ENCODE measurements at regions of chr6 and their contacts with region 1.

Region 1: GRCh38 chr6:142946181-142946923 is 1.4 kb upstream of the HIVEP2 start:
- DNase-seq: peak; percentile 92 to 99 (median 95)
- H3K4me3 ChIP-seq: peak overlapping the region; percentile 51 to 92
- H3K4me3 Mint-ChIP-seq: peak overlapping the region; percentile 92 to 100 (median 94)
- H3K27ac ChIP-seq: peak overlapping the region; percentile 99
- H3K27ac Mint-ChIP-seq: peak overlapping the region; percentile 99 to 100 (median 99)
- H3K4me1 ChIP-seq: peaks cover 33% of the 10 kb centered on the region
- H3K4me1 Mint-ChIP-seq: peaks cover 23 to 57% (median 32%) of the 10 kb centered on the region in 4 donors
- H3K27me3 ChIP-seq: no peaks in the 10 kb centered on the region
- H3K27me3 Mint-ChIP-seq: peaks cover 0 to 7% of the 10 kb centered on the region in 2 donors

Region 2: DNA sequence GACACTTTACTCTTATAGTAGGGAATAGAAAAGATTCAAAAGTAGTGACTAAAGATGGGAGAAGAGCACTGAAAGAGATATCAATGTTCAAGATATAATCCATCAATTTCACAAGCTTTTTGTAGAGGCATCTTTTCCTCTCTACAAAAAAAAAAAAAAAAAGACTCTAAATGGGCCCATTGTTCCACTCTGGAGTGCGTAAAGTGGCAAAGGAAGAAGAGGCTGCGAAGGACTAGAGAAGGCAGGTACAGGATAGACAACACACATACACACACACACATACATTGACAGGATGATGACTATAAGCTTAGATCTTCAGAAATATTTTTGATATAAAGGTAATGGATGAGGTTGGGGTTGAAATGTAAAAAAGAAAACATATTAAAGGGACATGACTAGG is 158.9 kb before region 1 on chr6:
- CTCF ChIA-PET with region 1: no interaction called
- POLR2A ChIA-PET with region 1: no interaction called
- intact Hi-C with region 1: no loop called
- DNase-seq: no peak
- H3K4me3 ChIP-seq: no peak overlapping the region
- H3K4me3 Mint-ChIP-seq: peak overlapping the region in 2 of 8 donors; percentile 16 to 35
- H3K27ac ChIP-seq: no peak overlapping the region
- H3K27ac Mint-ChIP-seq: peak overlapping the region; percentile 3 to 92 (median 56)
- H3K4me1 ChIP-seq: peaks cover 74% of the 10 kb centered on the region
- H3K4me1 Mint-ChIP-seq: peaks cover 48 to 77% (median 61%) of the 10 kb centered on the region in 4 donors
- H3K27me3 ChIP-seq: no peaks in the 10 kb centered on the region
- H3K27me3 Mint-ChIP-seq: no peaks in the 10 kb centered on the region

Region 3: DNA sequence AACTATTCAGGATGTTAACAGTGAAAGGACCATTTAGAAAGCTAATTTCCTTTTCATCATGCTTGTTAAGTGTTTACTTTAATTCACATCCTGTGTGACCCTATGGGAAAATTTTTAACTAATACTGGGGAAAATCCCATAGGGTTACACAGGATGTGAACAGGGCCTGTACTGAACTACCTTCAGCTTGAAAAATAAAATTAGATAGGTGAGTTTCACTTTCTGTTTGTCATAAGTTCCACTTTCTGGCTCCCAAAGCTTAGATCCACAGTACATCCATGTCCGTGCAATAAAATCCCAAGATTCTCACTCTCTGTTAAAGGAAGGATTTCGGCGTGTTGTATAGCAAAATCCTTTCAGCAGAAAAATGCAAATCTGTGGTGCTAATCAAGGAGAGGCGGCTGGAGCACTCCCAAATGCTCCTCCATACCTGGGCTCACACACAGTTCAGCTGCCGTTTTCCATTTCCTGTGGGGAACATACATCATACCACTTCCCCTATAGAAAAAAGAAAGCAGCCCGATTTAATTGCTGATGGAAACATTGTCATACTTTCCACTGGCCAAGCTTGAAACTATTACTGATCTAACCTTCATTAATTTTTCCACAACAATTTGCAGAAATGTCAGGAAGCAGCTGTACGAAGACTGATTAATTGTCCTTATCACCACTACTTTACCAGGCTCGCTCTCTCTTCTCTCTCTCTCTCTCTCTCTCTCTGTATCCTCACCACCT is 126.6 kb before region 1 on chr6:
- CTCF ChIA-PET with region 1: interaction called, 3 read pairs
- POLR2A ChIA-PET with region 1: interaction called, 10 read pairs
- intact Hi-C with region 1: no loop called
- DNase-seq: peak; percentile 45 to 84 (median 52)
- H3K4me3 ChIP-seq: peak overlapping the region; percentile 37 to 48
- H3K4me3 Mint-ChIP-seq: peak overlapping the region; percentile 76 to 92 (median 90)
- H3K27ac ChIP-seq: peak overlapping the region; percentile 76
- H3K27ac Mint-ChIP-seq: peak overlapping the region; percentile 87 to 100 (median 94)
- H3K4me1 ChIP-seq: peaks cover 88% of the 10 kb centered on the region
- H3K4me1 Mint-ChIP-seq: peaks cover 62 to 84% (median 71%) of the 10 kb centered on the region in 4 donors
- H3K27me3 ChIP-seq: no peaks in the 10 kb centered on the region
- H3K27me3 Mint-ChIP-seq: peaks cover 0 to 3% of the 10 kb centered on the region in 2 donors

Region 4: GRCh38 chr6:142850679-142851423 is 95.5 kb before region 1 on chr6:
- CTCF ChIA-PET with region 1: no interaction called
- POLR2A ChIA-PET with region 1: interaction called, 145 read pairs
- intact Hi-C with region 1: no loop called
- DNase-seq: peak in 1 of 5 donors; percentile 76
- H3K4me3 ChIP-seq: no peak overlapping the region
- H3K4me3 Mint-ChIP-seq: peak overlapping the region; percentile 62 to 86 (median 78)
- H3K27ac ChIP-seq: peak overlapping the region; percentile 46
- H3K27ac Mint-ChIP-seq: peak overlapping the region; percentile 88 to 96 (median 94)
- H3K4me1 ChIP-seq: peaks cover 100% of the 10 kb centered on the region
- H3K4me1 Mint-ChIP-seq: peaks cover 83 to 100% (median 92%) of the 10 kb centered on the region in 4 donors
- H3K27me3 ChIP-seq: no peaks in the 10 kb centered on the region
- H3K27me3 Mint-ChIP-seq: no peaks in the 10 kb centered on the region

Region 5: DNA sequence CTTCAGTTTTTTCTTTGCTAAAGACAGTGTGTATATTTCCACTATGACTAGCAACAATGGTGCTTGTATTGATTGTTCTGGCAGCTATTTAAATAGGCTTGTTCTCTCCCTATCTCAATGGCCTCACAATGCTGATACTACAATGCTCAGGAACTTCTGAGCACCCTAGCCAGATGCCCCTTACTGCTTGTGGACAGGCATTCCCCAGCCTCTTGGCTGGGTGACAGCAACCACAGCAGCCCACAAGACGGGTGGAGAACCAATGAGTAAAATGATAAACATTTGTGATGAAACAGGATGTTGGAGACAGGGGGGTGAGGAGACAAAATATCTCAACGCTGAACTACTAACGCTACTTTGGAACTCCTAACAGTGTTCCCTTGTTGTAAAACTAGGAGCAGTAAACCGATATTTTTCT is 43.7 kb before region 1 on chr6:
- CTCF ChIA-PET with region 1: interaction called, 8 read pairs
- POLR2A ChIA-PET with region 1: interaction called, 274 read pairs
- intact Hi-C with region 1: loop called (anchors 1 kb)
- DNase-seq: peak; percentile 85 to 92 (median 87)
- H3K4me3 ChIP-seq: peak overlapping the region in 1 of 2 donors; percentile 25
- H3K4me3 Mint-ChIP-seq: peak overlapping the region in 7 of 8 donors; percentile 66 to 91 (median 82)
- H3K27ac ChIP-seq: peak overlapping the region; percentile 86
- H3K27ac Mint-ChIP-seq: peak overlapping the region in 3 of 7 donors; percentile 98 to 99 (median 98)
- H3K4me1 ChIP-seq: peaks cover 88% of the 10 kb centered on the region
- H3K4me1 Mint-ChIP-seq: peaks cover 10 to 54% (median 34%) of the 10 kb centered on the region in 4 donors
- H3K27me3 ChIP-seq: no peaks in the 10 kb centered on the region
- H3K27me3 Mint-ChIP-seq: no peaks in the 10 kb centered on the region

Region 6: GRCh38 chr6:142935553-142936517 is 10.5 kb before region 1 on chr6:
- CTCF ChIA-PET with region 1: interaction called, 8 read pairs
- POLR2A ChIA-PET with region 1: interaction called, 452 read pairs
- intact Hi-C with region 1: loop called (anchors 1 kb)
- DNase-seq: peak in 3 of 5 donors; percentile 38 to 74 (median 42)
- H3K4me3 ChIP-seq: peak overlapping the region in 1 of 2 donors; percentile 37
- H3K4me3 Mint-ChIP-seq: peak overlapping the region; percentile 87 to 95 (median 90)
- H3K27ac ChIP-seq: peak overlapping the region; percentile 65
- H3K27ac Mint-ChIP-seq: peak overlapping the region; percentile 88 to 97 (median 95)
- H3K4me1 ChIP-seq: peaks cover 97% of the 10 kb centered on the region
- H3K4me1 Mint-ChIP-seq: peaks cover 68 to 96% (median 84%) of the 10 kb centered on the region in 4 donors
- H3K27me3 ChIP-seq: no peaks in the 10 kb centered on the region
- H3K27me3 Mint-ChIP-seq: no peaks in the 10 kb centered on the region

Region 7: DNA sequence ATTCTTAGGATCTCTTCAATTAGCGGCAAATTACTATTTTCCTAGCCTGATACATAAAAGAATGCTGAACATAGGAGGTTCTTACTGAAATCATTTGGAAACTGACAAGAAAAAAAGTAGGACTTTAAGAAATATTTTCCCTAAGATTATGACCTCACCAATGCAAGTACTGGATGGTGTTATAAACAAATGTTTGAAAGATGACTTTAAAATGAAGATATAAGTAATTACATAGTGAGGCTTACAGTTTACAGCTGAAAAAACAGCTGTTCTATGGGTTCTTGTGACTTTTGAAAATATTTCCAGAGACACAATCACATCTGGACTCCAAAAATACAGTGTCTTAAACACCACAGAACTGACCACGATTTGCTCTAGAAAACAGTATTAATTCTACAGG is 439.3 kb after region 1 on chr6:
- CTCF ChIA-PET with region 1: no interaction called
- POLR2A ChIA-PET with region 1: no interaction called
- intact Hi-C with region 1: no loop called
- DNase-seq: no peak
- H3K4me3 ChIP-seq: no peak overlapping the region
- H3K4me3 Mint-ChIP-seq: no peak overlapping the region
- H3K27ac ChIP-seq: no peak overlapping the region
- H3K27ac Mint-ChIP-seq: no peak overlapping the region
- H3K4me1 ChIP-seq: no peaks in the 10 kb centered on the region
- H3K4me1 Mint-ChIP-seq: no peaks in the 10 kb centered on the region
- H3K27me3 ChIP-seq: no peaks in the 10 kb centered on the region
- H3K27me3 Mint-ChIP-seq: peaks cover 0 to 2% of the 10 kb centered on the region in 2 donors